ENCODE measurements at regions of chr17 and their contacts with region 1.

Region 1: DNA sequence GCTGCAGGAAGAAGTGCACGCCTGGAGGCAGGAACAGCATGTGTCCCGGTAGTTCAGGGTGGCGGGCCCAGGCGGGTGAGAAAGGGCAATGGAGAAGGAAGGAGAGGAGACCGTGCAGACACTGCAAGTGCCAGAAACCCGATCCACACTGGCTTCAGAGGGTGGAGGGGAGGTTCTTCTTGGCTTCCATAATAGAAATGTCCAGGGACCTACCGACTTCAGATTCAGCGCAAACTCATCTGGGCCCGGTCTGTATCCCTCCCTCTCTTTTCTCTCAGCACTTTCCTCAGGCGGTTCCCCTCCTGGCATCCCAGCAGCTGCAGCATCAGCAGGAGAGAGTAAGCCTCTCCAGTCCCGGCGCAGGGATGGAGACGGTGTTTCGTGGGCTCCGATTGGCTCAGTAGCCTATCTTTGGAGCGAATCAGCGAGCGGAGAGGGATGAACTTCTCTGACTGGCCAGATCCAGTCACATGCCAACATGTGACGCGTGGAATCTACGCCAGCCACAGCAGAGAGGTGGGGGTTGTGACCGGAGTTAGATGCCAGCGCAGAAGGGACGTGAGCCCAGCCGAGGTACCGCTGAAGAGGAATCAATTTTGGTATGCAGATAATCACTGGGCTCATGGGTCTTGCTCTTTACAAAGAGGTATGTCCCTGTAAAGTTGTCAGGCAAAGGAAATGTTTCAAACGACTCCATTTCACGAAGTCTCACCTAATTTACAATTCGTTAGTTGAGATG is 1.9 kb upstream of the PRPSAP2 start:
- DNase-seq: peak; percentile 80
- ATAC-seq: peak; percentile 89
- H3K4me3 ChIP-seq: peak overlapping the region; percentile 77
- H3K27ac ChIP-seq: peak overlapping the region; percentile 75
- H3K4me1 ChIP-seq: peaks cover 7% of the 10 kb centered on the region
- H3K27me3 ChIP-seq: no peaks in the 10 kb centered on the region
- CTCF ChIP-seq: no peak
- EP300 ChIP-seq: no peak
- POLR2A ChIP-seq: peak; percentile 87
- RAD21 ChIP-seq: no peak

Region 2: GRCh38 chr17:18626152-18626870 is 229.7 kb before region 1 on chr17:
- CTCF ChIA-PET with region 1: interaction called, 4 read pairs
- POLR2A ChIA-PET with region 1: no interaction called
- RAD21 ChIA-PET with region 1: no interaction called
- SMC1A ChIA-PET with region 1: no interaction called
- in situ Hi-C with region 1: loop called (anchors 25 kb)
- intact Hi-C with region 1: no loop called
- DNase-seq: no peak
- ATAC-seq: no peak
- H3K4me3 ChIP-seq: peak overlapping the region; percentile 54; the same call in 1 of the 2 replicates
- H3K27ac ChIP-seq: no peak overlapping the region
- H3K4me1 ChIP-seq: peaks cover 5% of the 10 kb centered on the region; the same call in 1 of the 2 replicates
- H3K27me3 ChIP-seq: no peaks in the 10 kb centered on the region
- CTCF ChIP-seq: no peak
- EP300 ChIP-seq: no peak
- POLR2A ChIP-seq: no peak
- RAD21 ChIP-seq: no peak

Region 3: GRCh38 chr17:18896146-18896545 is 40.1 kb after region 1 on chr17:
- CTCF ChIA-PET with region 1: interaction called, 6 read pairs
- POLR2A ChIA-PET with region 1: interaction called, 11 read pairs
- RAD21 ChIA-PET with region 1: interaction called, 13 read pairs
- SMC1A ChIA-PET with region 1: interaction called, 20 read pairs
- in situ Hi-C with region 1: no loop called
- intact Hi-C with region 1: loop called (anchors 2 kb)
- DNase-seq: no peak
- ATAC-seq: no peak
- H3K4me3 ChIP-seq: no peak overlapping the region
- H3K27ac ChIP-seq: no peak overlapping the region
- H3K4me1 ChIP-seq: peaks cover 23% of the 10 kb centered on the region
- H3K27me3 ChIP-seq: no peaks in the 10 kb centered on the region
- CTCF ChIP-seq: no peak
- EP300 ChIP-seq: no peak
- POLR2A ChIP-seq: no peak
- RAD21 ChIP-seq: no peak

Region 4: DNA sequence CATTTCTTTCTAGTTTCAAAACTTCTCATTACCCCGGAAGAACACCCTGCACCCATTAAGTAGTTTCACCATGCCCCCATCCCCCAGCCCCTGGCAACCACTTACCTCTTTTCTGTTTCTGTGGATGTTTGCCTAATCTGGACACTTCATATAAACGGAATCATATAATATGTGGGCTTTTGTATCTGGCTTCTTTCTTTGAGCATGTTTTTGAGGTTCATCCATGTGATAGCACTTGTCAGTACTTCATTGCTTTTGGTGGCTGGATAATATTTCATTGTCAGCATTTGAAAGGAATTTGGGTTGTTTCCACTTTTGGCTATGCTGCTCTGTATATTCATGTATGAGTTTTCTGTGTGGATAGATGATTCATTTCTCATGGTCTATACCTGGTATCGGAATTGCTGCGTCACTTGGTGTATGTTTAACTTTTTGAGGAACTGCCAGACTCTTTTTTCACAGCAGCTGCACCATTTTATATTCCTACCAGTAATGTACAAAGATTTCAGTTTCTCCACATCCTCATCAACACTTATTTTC is 66.0 kb after region 1 on chr17:
- CTCF ChIA-PET with region 1: interaction called, 5 read pairs
- POLR2A ChIA-PET with region 1: interaction called, 18 read pairs
- RAD21 ChIA-PET with region 1: interaction called, 28 read pairs
- SMC1A ChIA-PET with region 1: interaction called, 5 read pairs
- in situ Hi-C with region 1: loop called (anchors 5 kb)
- intact Hi-C with region 1: loop called (anchors 2 kb)
- DNase-seq: peak; percentile 90
- ATAC-seq: peak; percentile 79
- H3K4me3 ChIP-seq: 0 out of 2 replicates have a peak overlapping the region, but pooled peaks have one; percentile 37
- H3K27ac ChIP-seq: peak overlapping the region; percentile 98
- H3K4me1 ChIP-seq: peaks cover 28% of the 10 kb centered on the region
- H3K27me3 ChIP-seq: no peaks in the 10 kb centered on the region
- CTCF ChIP-seq: no peak
- EP300 ChIP-seq: peak; percentile 84 to 92
- POLR2A ChIP-seq: no peak
- RAD21 ChIP-seq: 0 out of 2 replicates have a peak, but pooled peaks have one; percentile 5

Region 5: DNA sequence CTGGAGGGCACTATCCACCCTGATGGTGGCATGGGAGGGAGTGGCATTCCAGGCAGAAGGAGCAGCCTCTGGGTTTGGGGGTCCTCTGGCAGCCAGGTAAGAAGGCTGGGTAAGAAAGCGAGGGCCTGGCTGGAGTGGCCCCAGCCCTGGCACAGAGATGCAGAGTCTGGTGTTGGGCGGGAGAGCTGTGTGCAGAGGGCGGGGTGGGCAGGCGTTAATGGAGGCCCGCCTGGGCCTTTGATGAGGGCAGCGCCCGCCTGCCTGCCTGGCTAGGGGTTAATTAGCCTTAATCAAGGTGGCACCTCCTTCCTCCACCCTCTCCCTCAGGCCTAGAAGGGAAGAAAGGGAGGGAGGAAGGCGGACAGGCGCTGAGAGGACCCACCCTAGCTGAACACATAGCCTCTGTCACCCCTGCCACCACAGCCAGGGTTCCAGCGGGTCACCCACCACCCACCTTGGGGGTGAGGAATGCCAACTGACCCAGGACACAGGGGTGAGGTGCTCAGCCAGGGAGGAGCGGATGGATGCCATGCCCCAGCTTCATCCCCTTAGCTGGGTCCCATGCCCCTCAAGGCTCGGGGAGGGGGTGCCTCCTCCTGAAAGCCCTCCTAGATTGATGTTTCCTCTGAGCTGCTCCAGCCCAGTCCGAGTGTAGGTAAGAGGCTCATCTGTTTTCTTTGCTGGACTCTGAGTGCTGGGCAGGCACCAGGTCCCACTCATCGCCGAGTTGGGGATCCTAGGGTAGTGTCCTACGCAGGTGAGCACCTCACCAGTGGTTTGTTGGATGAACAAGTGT is 162.0 kb after region 1 on chr17:
- CTCF ChIA-PET with region 1: no interaction called
- POLR2A ChIA-PET with region 1: no interaction called
- RAD21 ChIA-PET with region 1: no interaction called
- SMC1A ChIA-PET with region 1: no interaction called
- in situ Hi-C with region 1: no loop called
- intact Hi-C with region 1: no loop called
- DNase-seq: no peak
- ATAC-seq: no peak
- H3K4me3 ChIP-seq: no peak overlapping the region
- H3K27ac ChIP-seq: no peak overlapping the region
- H3K4me1 ChIP-seq: no peaks in the 10 kb centered on the region
- H3K27me3 ChIP-seq: no peaks in the 10 kb centered on the region
- CTCF ChIP-seq: no peak
- EP300 ChIP-seq: no peak
- POLR2A ChIP-seq: peak; percentile 53
- RAD21 ChIP-seq: no peak

Measured in GM12878 (cell line).